Common myeloid progenitor, CD34-positive (primary cell): ENCODE measurements at regions of chr1 and their contacts with region 1.

Region 1: DNA sequence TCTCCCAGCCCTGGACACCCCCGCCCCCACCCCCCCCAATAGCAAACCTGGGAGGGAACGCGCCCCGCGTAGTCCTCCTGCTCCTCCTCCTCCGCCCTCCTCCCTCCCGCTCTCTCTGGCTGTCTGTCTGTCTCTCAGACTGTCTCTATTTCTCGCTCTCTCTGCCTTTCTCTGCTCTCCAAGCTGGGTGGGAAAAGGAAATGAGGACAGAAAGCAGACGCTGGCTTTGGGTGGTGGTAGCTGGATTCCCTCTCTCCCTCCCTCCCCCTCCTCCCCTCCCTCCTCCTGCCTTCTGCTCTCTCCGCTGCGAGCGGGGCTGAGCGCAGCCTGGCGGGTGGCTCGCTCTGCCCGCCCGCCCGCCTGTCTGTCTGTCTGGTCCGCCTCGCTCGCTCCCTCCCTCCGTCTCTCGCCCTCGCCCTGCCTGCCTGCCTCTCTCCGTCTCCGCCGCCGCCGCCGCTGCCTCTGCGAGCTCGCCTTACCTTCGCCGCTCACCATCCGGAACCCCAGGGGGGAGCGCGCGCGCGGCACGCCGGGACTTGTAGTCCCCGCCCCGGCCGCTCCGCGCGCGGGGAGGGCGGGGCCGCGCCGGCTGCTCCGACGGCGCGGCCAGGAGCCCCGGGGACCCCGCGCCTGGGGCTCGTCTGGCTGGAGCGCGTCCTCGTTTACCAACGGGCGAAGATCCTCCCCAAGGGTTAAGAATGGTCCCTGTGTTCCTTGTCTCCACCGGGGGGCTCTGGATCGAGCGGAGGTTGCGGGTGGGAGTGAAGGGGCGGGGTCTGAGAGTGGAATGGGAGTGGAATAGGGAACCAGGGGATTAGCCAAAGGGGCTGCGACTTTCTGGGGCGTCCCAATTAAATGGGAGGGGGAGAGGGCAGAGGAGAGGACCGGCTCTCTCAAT is at the start of gene AHDC1:
- DNase-seq: peak; percentile 91 to 95 (median 92)
- H3K4me3 ChIP-seq: peak within 1 kb of the TSS; percentile 74 to 89 (median 83)
- H3K27ac ChIP-seq: peak within 1 kb of the TSS in 1 of 2 experiments; percentile 79
- H3K4me1 ChIP-seq: peaks cover 3 to 83% (median 71%) of the 10 kb centered on the region in 4 experiments
- H3K27me3 ChIP-seq: no peaks in the 10 kb centered on the region

Region 2: GRCh38 chr1:27392096-27392777 is 211.7 kb before region 1 on chr1 and contains the start of gene GPR3:
- CTCF ChIA-PET with region 1: interaction called, 23 read pairs
- POLR2A ChIA-PET with region 1: no interaction called
- DNase-seq: peak; percentile 93 to 96 (median 95)
- H3K4me3 ChIP-seq: peak within 1 kb of the TSS; percentile 19 to 78 (median 72)
- H3K27ac ChIP-seq: no peak within 1 kb of the TSS
- H3K4me1 ChIP-seq: peaks cover 2 to 24% (median 18%) of the 10 kb centered on the region in 4 experiments
- H3K27me3 ChIP-seq: no peaks in the 10 kb centered on the region

Region 3: DNA sequence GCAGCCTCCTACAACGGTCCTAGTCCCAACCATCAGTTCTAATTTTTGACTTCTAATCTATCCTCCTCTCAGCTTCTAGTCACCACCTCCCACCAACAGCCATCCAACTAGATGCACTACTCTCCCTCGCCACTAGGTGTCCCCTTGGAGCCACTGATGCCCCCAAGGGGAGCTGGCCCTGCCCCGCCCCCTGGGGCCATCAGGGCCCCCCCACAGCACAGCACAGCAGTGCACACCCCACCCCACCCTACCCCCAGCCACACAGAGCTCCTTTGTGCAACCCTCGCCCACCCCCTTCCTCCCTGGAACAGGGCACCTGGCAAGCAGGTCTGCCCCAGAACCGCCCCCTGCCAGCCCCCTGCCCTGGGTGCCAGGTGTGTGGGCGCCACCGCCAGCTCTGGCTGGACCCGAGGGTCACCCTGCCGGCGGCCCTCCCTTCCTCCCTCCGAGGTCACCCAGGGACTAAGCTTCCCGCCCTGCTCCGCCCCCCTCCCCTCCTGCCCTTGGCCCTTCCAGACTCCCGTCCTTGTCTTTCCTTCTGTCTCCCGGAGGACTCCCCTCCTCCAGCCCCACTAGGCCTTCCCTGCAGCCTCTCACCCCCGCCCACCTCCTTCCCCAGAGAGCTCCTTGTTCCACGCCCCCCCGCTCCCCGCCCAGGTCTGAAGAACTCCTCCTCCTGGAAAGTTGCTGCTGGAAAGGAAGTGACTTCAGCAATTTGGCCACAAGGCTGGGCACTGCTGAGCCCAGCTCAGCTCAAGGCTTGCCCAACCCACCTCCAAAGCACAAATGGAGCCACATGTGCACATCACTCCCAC is 46.9 kb before region 1 on chr1:
- CTCF ChIA-PET with region 1: interaction called, 117 read pairs
- POLR2A ChIA-PET with region 1: interaction called, 4 read pairs
- DNase-seq: peak; percentile 67 to 86 (median 84)
- H3K4me3 ChIP-seq: no peak overlapping the region
- H3K27ac ChIP-seq: peak overlapping the region in 1 of 2 experiments; percentile 36
- H3K4me1 ChIP-seq: peaks cover 4 to 69% (median 58%) of the 10 kb centered on the region in 4 experiments
- H3K27me3 ChIP-seq: no peaks in the 10 kb centered on the region

Region 4: GRCh38 chr1:27581823-27582243 is 22.1 kb before region 1 on chr1:
- CTCF ChIA-PET with region 1: interaction called, 13 read pairs
- POLR2A ChIA-PET with region 1: interaction called, 3 read pairs
- DNase-seq: no peak
- H3K4me3 ChIP-seq: no peak overlapping the region
- H3K27ac ChIP-seq: no peak overlapping the region
- H3K4me1 ChIP-seq: peaks cover 4 to 40% (median 30%) of the 10 kb centered on the region in 4 experiments
- H3K27me3 ChIP-seq: no peaks in the 10 kb centered on the region

Region 5: DNA sequence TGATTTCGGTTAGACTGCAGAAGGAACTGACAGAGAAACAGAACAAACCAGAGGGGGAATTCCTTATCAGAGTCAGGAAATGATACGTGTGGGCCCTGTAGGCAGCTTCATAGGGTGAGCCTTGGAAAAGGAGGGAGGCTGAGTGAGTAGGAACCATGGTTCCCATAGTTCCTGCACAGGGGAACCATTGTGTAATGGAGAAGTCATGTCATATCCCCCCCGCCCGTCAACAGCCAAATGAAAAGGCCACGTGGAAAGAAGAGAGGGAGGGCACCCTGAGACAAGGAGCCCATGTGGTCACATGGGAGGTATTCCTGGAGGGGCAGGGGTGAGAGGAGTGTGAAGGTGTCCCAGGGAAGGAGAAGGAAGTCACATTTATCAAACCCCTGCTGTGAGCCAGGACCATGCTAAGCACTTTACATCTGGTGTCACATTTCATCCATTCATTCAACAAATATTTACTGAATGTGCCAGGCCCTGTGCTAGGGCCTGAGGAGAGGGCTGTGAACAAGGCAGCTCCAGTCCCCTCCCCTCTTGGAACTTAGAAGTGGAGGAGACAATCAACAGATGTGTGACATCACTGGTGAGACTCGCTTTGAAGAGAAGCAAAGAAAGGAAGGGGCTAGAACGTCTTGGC is 46.7 kb after region 1 on chr1:
- CTCF ChIA-PET with region 1: interaction called, 31 read pairs
- POLR2A ChIA-PET with region 1: no interaction called
- DNase-seq: peak in 1 of 3 donors; percentile 32
- H3K4me3 ChIP-seq: no peak overlapping the region
- H3K27ac ChIP-seq: no peak overlapping the region
- H3K4me1 ChIP-seq: peaks cover 0 to 34% (median 14%) of the 10 kb centered on the region in 4 experiments
- H3K27me3 ChIP-seq: no peaks in the 10 kb centered on the region